ENCODE measurements at regions of chr2 and their contacts with region 1.

Region 1: GRCh38 chr2:66445925-66446860 is 11.3 kb downstream of the MEIS1 start:
- DNase-seq: peak; percentile 41 to 66
- ATAC-seq: peak; percentile 71 to 83 (median 80)
- H3K4me3 ChIP-seq: peak overlapping the region; percentile 27 to 83 (median 40)
- H3K27ac ChIP-seq: peak overlapping the region; percentile 62 to 95 (median 86)
- H3K4me1 ChIP-seq: peaks cover 0 to 41% (median 15%) of the 10 kb centered on the region in 9 donors
- H3K27me3 ChIP-seq: peaks cover 0 to 58% (median 0%) of the 10 kb centered on the region in 7 donors
- CTCF ChIP-seq: peak in 6 of 9 donors; percentile 15 to 49 (median 38)

Region 2: GRCh38 chr2:65666156-65666725 is 780.0 kb before region 1 on chr2:
- intact Hi-C with region 1: no loop called
- DNase-seq: no peak
- ATAC-seq: no peak
- H3K4me3 ChIP-seq: no peak overlapping the region
- H3K27ac ChIP-seq: no peak overlapping the region
- H3K4me1 ChIP-seq: no peaks in the 10 kb centered on the region
- H3K27me3 ChIP-seq: peaks cover 0 to 15% (median 0%) of the 10 kb centered on the region in 7 donors
- CTCF ChIP-seq: no peak

Region 3: GRCh38 chr2:66481100-66481549 is 34.9 kb after region 1 on chr2:
- intact Hi-C with region 1: loop called in 1 of 10 experiments (anchors 5 kb)
- DNase-seq: peak in 1 of 2 donors; percentile 43
- ATAC-seq: peak in 7 of 8 donors; percentile 56 to 86 (median 75)
- H3K4me3 ChIP-seq: no peak overlapping the region
- H3K27ac ChIP-seq: peak overlapping the region in 9 of 10 donors; percentile 24 to 74 (median 54)
- H3K4me1 ChIP-seq: peaks cover 2 to 55% (median 49%) of the 10 kb centered on the region in 9 donors
- H3K27me3 ChIP-seq: no peaks in the 10 kb centered on the region
- CTCF ChIP-seq: no peak

Region 4: GRCh38 chr2:66495788-66496640 is 49.8 kb after region 1 on chr2:
- intact Hi-C with region 1: loop called in 3 of 10 experiments (anchors 5 to 10 kb)
- DNase-seq: peak in 1 of 2 donors; percentile 44
- ATAC-seq: peak; percentile 44 to 84 (median 79)
- H3K4me3 ChIP-seq: no peak overlapping the region
- H3K27ac ChIP-seq: peak overlapping the region in 9 of 10 donors; percentile 11 to 74 (median 69)
- H3K4me1 ChIP-seq: peaks cover 3 to 54% (median 34%) of the 10 kb centered on the region in 9 donors
- H3K27me3 ChIP-seq: no peaks in the 10 kb centered on the region
- CTCF ChIP-seq: peak in 4 of 9 donors; percentile 6 to 38 (median 30)

Region 5: GRCh38 chr2:67322353-67323001 is 876.3 kb after region 1 on chr2:
- intact Hi-C with region 1: loop called in 1 of 10 experiments (anchors 10 kb)
- DNase-seq: peak in 1 of 2 donors; percentile 20
- ATAC-seq: peak; percentile 43 to 88 (median 78)
- H3K4me3 ChIP-seq: no peak overlapping the region
- H3K27ac ChIP-seq: no peak overlapping the region
- H3K4me1 ChIP-seq: peaks cover 0 to 9% (median 4%) of the 10 kb centered on the region in 9 donors
- H3K27me3 ChIP-seq: peaks cover 0 to 15% (median 5%) of the 10 kb centered on the region in 7 donors
- CTCF ChIP-seq: peak in 5 of 9 donors; percentile 10 to 45 (median 33)

Region 6: GRCh38 chr2:67806816-67807215 is 1360.6 kb after region 1 on chr2:
- intact Hi-C with region 1: no loop called
- DNase-seq: no peak
- ATAC-seq: no peak
- H3K4me3 ChIP-seq: no peak overlapping the region
- H3K27ac ChIP-seq: no peak overlapping the region
- H3K4me1 ChIP-seq: no peaks in the 10 kb centered on the region
- H3K27me3 ChIP-seq: peaks cover 0 to 4% (median 0%) of the 10 kb centered on the region in 7 donors
- CTCF ChIP-seq: no peak

Measured in heart right ventricle (tissue), 16 donors.